PC-9 (cell line): ENCODE measurements at regions of chr14 and their contacts with region 1.

Region 1: DNA sequence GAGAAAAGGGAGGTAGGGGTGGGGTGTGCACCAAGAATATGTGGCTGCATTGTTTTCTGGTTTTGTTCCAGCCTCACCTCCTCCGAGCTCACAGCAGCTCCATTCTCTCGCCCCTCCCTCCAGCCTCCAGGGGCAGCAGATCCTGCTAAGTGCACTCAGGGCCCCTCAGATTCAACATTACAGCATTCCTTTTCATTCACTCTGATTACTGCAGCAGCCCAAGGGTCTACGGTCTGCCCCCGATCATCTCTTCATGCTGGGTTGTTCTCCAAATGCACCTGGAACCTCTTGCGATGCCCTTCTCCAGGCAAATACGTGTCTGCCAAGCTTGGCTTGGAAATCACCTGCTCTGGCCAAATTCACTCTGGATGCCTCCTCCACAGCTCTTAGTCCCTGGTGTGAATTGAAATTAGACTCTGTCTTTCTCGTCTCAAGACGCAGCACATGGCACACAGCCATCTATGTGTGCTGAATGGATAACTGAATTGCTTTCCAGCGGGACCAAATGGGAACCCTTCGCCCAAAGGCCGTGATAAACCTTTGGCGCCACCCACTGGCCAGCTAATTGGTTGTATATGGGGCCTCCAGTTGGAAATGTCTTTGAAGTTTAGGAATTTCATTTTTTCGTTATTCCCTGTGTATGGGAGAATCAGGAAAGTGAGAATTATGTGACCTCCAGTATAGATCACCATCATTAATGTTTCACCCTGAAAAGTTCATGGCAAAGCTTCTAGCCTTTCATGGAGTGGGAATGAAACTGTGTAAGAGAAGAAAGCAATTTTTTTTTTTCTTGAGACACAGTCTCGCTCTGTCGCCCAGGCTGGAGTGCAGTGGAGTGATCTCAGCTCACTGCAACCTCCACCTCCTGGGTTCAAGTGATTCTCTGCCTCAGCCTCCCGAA is 9.6 kb upstream of the HSP90AA1 start:
- DNase-seq: peak; percentile 70 to 88
- H3K4me3 ChIP-seq: peak overlapping the region; percentile 11; the same call in 1 of the 2 replicates
- H3K27ac ChIP-seq: peak overlapping the region; percentile 61
- H3K4me1 ChIP-seq: peaks cover 43% of the 10 kb centered on the region
- H3K27me3 ChIP-seq: no peaks in the 10 kb centered on the region
- CTCF ChIP-seq: peak; percentile 98

Region 2: GRCh38 chr14:101774006-101774795 is 322.3 kb before region 1 on chr14:
- CTCF ChIA-PET with region 1: no interaction called
- POLR2A ChIA-PET with region 1: interaction called, 3 read pairs
- intact Hi-C with region 1: loop called (anchors 5 kb)
- DNase-seq: no peak
- H3K4me3 ChIP-seq: no peak overlapping the region
- H3K27ac ChIP-seq: no peak overlapping the region
- H3K4me1 ChIP-seq: peaks cover 37% of the 10 kb centered on the region
- H3K27me3 ChIP-seq: no peaks in the 10 kb centered on the region
- CTCF ChIP-seq: no peak

Region 3: GRCh38 chr14:101980251-101981099 is 116.0 kb before region 1 on chr14:
- CTCF ChIA-PET with region 1: no interaction called
- POLR2A ChIA-PET with region 1: no interaction called
- intact Hi-C with region 1: loop called (anchors 5 kb)
- DNase-seq: peak; percentile 95 to 100
- H3K4me3 ChIP-seq: peak overlapping the region; percentile 5; the same call in 1 of the 2 replicates
- H3K27ac ChIP-seq: peak overlapping the region; percentile 88
- H3K4me1 ChIP-seq: peaks cover 54% of the 10 kb centered on the region
- H3K27me3 ChIP-seq: no peaks in the 10 kb centered on the region
- CTCF ChIP-seq: no peak

Region 4: DNA sequence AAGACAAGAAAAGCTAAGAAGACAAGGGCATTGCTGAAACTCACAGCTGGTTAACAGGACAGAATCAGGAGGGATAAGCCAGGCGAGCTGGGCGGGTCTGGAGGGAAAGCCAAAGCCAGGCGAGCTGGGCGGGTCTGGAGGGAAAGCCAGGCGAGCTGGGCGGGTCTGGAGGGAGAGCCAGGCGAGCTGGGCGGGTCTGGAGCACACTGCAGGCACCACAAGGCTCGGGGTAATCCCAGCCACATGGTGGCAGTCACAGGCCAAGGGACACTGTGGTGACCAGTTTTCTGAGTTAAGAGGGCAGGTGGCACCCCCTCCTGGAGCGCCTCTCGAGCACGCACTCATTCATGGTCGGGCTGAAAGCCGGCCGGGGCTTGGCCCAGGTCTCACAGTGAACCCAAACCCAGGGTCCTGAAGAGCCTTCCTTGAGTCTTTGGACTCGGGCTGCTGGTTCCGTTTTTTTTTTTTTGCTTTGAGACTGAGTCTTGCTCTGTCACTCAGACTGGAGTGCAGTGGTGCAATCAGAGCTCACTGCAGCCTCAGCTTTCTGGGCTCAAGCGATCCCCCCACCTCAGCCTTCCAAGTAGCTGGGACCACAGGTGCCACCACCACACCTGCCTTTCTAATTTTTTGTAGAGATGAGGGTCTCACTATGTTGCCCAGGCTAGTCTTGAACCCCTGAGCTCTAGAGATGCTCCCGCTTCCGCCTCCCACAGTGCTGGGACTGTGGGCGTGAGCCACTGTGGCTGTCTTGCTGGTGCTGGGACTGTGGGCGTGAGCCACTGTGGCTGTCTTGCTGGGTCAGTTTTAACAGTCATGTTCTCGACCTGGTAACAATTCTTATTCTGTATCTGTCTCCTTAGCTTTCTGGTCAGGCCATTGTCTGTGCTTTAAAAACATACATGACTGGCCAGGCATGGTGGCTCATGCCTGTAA is 49.9 kb before region 1 on chr14:
- CTCF ChIA-PET with region 1: interaction called, 21 read pairs
- POLR2A ChIA-PET with region 1: no interaction called
- intact Hi-C with region 1: loop called (anchors 1 kb)
- DNase-seq: peak; percentile 98 to 100
- H3K4me3 ChIP-seq: no peak overlapping the region
- H3K27ac ChIP-seq: no peak overlapping the region
- H3K4me1 ChIP-seq: peaks cover 3% of the 10 kb centered on the region
- H3K27me3 ChIP-seq: no peaks in the 10 kb centered on the region
- CTCF ChIP-seq: peak; percentile 84

Region 5: GRCh38 chr14:102125546-102125945 is 29.1 kb after region 1 on chr14:
- CTCF ChIA-PET with region 1: interaction called, 12 read pairs
- POLR2A ChIA-PET with region 1: interaction called, 4 read pairs
- intact Hi-C with region 1: loop called (anchors 1 kb)
- DNase-seq: peak; percentile 25 to 97
- H3K4me3 ChIP-seq: peak overlapping the region; percentile 14
- H3K27ac ChIP-seq: peak overlapping the region; percentile 72
- H3K4me1 ChIP-seq: peaks cover 36% of the 10 kb centered on the region
- H3K27me3 ChIP-seq: no peaks in the 10 kb centered on the region
- CTCF ChIP-seq: no peak

Region 6: GRCh38 chr14:102220031-102220430 is 123.6 kb after region 1 on chr14:
- CTCF ChIA-PET with region 1: interaction called, 4 read pairs
- POLR2A ChIA-PET with region 1: interaction called, 4 read pairs
- intact Hi-C with region 1: loop called (anchors 1 kb)
- DNase-seq: no peak
- H3K4me3 ChIP-seq: no peak overlapping the region
- H3K27ac ChIP-seq: no peak overlapping the region
- H3K4me1 ChIP-seq: peaks cover 19% of the 10 kb centered on the region
- H3K27me3 ChIP-seq: no peaks in the 10 kb centered on the region
- CTCF ChIP-seq: no peak